Esophagus squamous epithelium (tissue), 5 donors: ENCODE measurements at regions of chr19 and their contacts with region 1.

Region 1: DNA sequence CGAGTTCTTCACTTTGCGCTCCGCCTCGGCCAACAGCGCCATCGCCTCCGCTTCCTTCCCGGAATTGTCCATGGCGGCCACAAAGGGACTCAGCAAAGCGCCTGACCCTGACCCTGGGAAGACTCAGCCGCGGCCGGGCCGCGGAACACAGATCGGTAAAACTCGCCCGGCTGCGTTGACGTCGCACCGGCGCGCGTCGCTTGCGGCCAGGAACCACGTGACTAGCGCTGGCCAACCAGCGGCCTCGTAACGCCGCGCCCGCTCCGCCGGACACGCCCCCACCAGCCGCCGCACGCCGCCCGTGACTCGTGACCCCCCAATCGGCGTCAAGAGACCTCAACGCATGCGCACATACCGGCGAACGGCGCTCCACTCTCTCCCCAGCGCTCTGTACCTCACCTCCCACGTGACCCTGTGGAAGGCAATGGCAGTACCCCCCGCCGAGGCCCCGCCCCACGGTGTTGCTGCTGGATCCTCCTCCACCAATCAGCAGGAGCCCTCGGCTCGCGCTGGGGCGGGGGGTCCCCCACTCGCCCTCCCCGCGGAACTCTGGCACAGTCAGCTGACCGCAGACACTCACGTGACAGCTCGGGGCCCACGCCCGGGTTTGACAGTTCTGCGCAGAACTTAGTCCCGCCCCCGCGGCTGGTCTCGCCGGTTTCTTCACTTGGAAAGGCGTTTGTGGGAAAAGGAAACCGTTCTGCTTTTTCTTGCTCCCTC is at the start of gene NAPA:
- DNase-seq: peak; percentile 100
- H3K4me3 ChIP-seq: peak within 1 kb of the TSS; percentile 79 to 99 (median 90)
- H3K27ac ChIP-seq: peak within 1 kb of the TSS; percentile 97 to 99 (median 98)
- H3K4me1 ChIP-seq: peaks cover 36 to 52% (median 41%) of the 10 kb centered on the region in 3 donors
- H3K27me3 ChIP-seq: no peaks in the 10 kb centered on the region
- CTCF ChIP-seq: peak in 1 of 6 experiments; percentile 11
- POLR2A ChIP-seq: peak in 3 of 4 donors; percentile 72 to 98 (median 94)
- total RNA-seq, gene NAPA: 106 to 178 (median 125) TPM

Region 2: GRCh38 chr19:47330466-47330869 is 184.6 kb before region 1 on chr19:
- intact Hi-C with region 1: no loop called
- DNase-seq: no peak
- H3K4me3 ChIP-seq: peak overlapping the region in 1 of 4 donors; percentile 15
- H3K27ac ChIP-seq: peak overlapping the region; percentile 56 to 79 (median 69)
- H3K4me1 ChIP-seq: peaks cover 0 to 23% (median 0%) of the 10 kb centered on the region in 3 donors
- H3K27me3 ChIP-seq: peaks cover 0 to 5% (median 0%) of the 10 kb centered on the region in 4 donors
- CTCF ChIP-seq: no peak
- POLR2A ChIP-seq: peak in 1 of 4 donors; percentile 16

Region 3: GRCh38 chr19:47582320-47582909 is 67.4 kb after region 1 on chr19:
- intact Hi-C with region 1: no loop called
- DNase-seq: no peak
- H3K4me3 ChIP-seq: no peak overlapping the region
- H3K27ac ChIP-seq: peak overlapping the region; percentile 22 to 87 (median 72)
- H3K4me1 ChIP-seq: peaks cover 12 to 35% (median 16%) of the 10 kb centered on the region in 3 donors
- H3K27me3 ChIP-seq: no peaks in the 10 kb centered on the region
- CTCF ChIP-seq: no peak
- POLR2A ChIP-seq: no peak

Region 4: GRCh38 chr19:47697863-47698609 is 183.0 kb after region 1 on chr19:
- intact Hi-C with region 1: loop called (anchors 2 kb)
- DNase-seq: no peak
- H3K4me3 ChIP-seq: no peak overlapping the region
- H3K27ac ChIP-seq: peak overlapping the region; percentile 20 to 76 (median 60)
- H3K4me1 ChIP-seq: peaks cover 0 to 11% (median 5%) of the 10 kb centered on the region in 3 donors
- H3K27me3 ChIP-seq: no peaks in the 10 kb centered on the region
- CTCF ChIP-seq: peak; percentile 89 to 99 (median 96)
- POLR2A ChIP-seq: no peak

Region 5: GRCh38 chr19:48069435-48069834 is 554.4 kb after region 1 on chr19:
- intact Hi-C with region 1: no loop called
- DNase-seq: no peak
- H3K4me3 ChIP-seq: no peak overlapping the region
- H3K27ac ChIP-seq: no peak overlapping the region
- H3K4me1 ChIP-seq: no peaks in the 10 kb centered on the region
- H3K27me3 ChIP-seq: no peaks in the 10 kb centered on the region
- CTCF ChIP-seq: no peak
- POLR2A ChIP-seq: no peak